ENCODE measurements at regions of chr5 and their contacts with region 1.

Region 1: DNA sequence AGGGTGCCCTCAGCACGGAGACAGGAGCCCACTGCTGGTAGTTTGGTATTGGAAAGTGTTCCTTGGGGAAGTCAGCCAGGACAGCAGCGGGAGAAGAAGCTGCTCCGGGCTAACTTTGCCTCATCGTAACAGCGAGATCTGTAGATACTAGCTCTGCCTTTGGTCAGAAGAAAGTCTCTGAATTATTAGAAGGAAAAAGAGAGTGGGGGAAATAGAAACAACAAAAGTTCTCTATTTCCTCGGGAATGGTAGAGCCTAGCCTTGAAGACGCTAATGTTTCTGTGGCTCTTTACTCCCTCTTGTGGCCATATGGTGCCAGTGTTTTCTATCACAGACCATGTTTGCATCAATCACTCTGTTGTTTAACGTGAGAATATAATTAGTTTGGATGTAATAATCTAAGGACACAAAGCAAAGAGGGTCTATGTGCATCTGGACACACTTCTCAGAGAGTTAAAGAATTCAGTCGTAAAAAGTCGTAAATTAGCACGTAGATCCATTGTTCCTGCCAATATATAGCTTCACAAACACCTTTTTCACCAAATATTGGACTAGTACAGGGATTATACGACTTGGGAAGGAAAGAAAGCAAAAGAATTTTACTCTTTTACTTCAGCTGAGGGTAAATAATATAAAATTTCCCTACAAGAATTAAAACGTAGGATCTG is 40.2 kb upstream of the HSD17B4 start:
- DNase-seq: peak; percentile 36 to 61
- H3K4me3 ChIP-seq: peak overlapping the region; percentile 59
- H3K27ac ChIP-seq: no peak overlapping the region
- H3K4me1 ChIP-seq: peaks cover 14% of the 10 kb centered on the region; the same call in 1 of the 2 replicates
- H3K27me3 ChIP-seq: no peaks in the 10 kb centered on the region
- CTCF ChIP-seq: peak; percentile 88

Region 2: GRCh38 chr5:119022017-119022745 is 389.9 kb before region 1 on chr5:
- CTCF ChIA-PET with region 1: interaction called, 7 read pairs
- POLR2A ChIA-PET with region 1: no interaction called
- intact Hi-C with region 1: loop called (anchors 1 kb)
- DNase-seq: peak in 1 of 2 experiments; percentile 36
- H3K4me3 ChIP-seq: no peak overlapping the region
- H3K27ac ChIP-seq: no peak overlapping the region
- H3K4me1 ChIP-seq: no peaks in the 10 kb centered on the region
- H3K27me3 ChIP-seq: no peaks in the 10 kb centered on the region
- CTCF ChIP-seq: peak; percentile 61

Region 3: DNA sequence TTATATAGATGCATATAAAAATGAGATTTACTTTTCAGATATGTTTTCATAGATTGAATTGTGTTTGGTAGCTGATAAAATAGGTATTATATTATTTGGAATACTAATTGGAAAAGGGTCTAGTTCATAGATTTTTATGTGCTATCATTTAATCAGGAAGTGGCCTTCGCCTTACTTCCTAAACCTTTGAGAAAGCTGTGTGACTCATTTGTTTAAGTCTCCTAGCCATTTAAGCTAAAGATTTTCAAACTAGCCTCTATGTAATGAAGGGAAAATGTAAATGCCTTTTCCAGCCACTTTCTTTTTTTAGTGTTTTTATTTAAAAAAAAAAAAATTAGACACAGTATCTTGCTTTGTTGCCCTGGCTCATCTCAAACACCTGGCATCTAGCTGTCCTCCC is 243.7 kb before region 1 on chr5:
- CTCF ChIA-PET with region 1: no interaction called
- POLR2A ChIA-PET with region 1: no interaction called
- intact Hi-C with region 1: no loop called
- DNase-seq: no peak
- H3K4me3 ChIP-seq: no peak overlapping the region
- H3K27ac ChIP-seq: peak overlapping the region; percentile 46; the same call in 1 of the 2 replicates
- H3K4me1 ChIP-seq: peaks cover 10% of the 10 kb centered on the region
- H3K27me3 ChIP-seq: no peaks in the 10 kb centered on the region
- CTCF ChIP-seq: no peak

Region 4: GRCh38 chr5:119179857-119180641 is 232.0 kb before region 1 on chr5:
- CTCF ChIA-PET with region 1: no interaction called
- POLR2A ChIA-PET with region 1: no interaction called
- intact Hi-C with region 1: loop called (anchors 10 kb)
- DNase-seq: no peak
- H3K4me3 ChIP-seq: no peak overlapping the region
- H3K27ac ChIP-seq: no peak overlapping the region
- H3K4me1 ChIP-seq: 0 out of 2 replicates have a peak, but pooled peaks cover 6% of the 10 kb centered on the region
- H3K27me3 ChIP-seq: no peaks in the 10 kb centered on the region
- CTCF ChIP-seq: no peak

Region 5: DNA sequence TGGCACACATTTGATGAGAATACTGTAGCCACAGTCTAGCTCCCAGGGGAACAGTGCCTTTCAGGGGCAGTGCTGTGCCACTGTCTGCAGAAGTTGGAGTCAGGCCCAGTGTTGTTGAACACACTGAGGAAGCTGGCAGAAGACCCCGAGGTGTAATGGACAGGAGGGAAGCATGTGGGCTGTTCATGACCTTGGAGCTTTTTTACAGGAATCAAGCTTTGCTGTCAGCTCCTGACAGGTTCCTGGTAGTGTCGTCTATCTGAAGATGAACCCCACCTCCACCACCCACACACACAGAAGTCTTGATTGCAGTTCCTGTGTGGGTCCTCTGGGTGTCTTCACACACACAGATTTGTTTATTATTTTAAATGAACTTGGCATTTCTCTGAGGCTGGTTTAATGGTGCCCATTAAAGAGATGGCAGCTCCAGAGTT is 96.5 kb before region 1 on chr5:
- CTCF ChIA-PET with region 1: interaction called, 12 read pairs
- POLR2A ChIA-PET with region 1: no interaction called
- intact Hi-C with region 1: loop called (anchors 5 kb)
- DNase-seq: no peak
- H3K4me3 ChIP-seq: no peak overlapping the region
- H3K27ac ChIP-seq: no peak overlapping the region
- H3K4me1 ChIP-seq: no peaks in the 10 kb centered on the region
- H3K27me3 ChIP-seq: no peaks in the 10 kb centered on the region
- CTCF ChIP-seq: peak; percentile 46; the same call in 1 of the 2 replicates

Region 6: DNA sequence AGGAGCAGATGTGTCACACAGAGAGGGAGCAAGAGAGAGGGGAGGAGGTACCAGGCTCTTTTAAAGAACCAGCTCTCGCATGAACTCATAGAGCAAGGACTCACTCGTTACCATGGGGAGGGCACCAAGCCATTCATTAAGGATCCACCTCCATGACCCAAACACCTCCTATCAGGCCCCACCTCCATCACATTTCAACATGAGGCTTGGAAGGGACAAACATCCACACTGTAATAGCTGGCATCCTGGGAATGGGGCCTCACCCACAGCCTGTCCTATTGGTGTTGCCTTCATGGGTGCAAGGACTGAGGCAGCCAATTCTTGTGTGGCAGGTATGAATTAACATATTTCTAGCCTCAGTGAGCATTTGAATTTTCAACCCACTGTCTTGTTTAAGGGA is 67.8 kb before region 1 on chr5:
- CTCF ChIA-PET with region 1: no interaction called
- POLR2A ChIA-PET with region 1: no interaction called
- intact Hi-C with region 1: no loop called
- DNase-seq: no peak
- H3K4me3 ChIP-seq: no peak overlapping the region
- H3K27ac ChIP-seq: no peak overlapping the region
- H3K4me1 ChIP-seq: peaks cover 15% of the 10 kb centered on the region
- H3K27me3 ChIP-seq: no peaks in the 10 kb centered on the region
- CTCF ChIP-seq: no peak

Region 7: DNA sequence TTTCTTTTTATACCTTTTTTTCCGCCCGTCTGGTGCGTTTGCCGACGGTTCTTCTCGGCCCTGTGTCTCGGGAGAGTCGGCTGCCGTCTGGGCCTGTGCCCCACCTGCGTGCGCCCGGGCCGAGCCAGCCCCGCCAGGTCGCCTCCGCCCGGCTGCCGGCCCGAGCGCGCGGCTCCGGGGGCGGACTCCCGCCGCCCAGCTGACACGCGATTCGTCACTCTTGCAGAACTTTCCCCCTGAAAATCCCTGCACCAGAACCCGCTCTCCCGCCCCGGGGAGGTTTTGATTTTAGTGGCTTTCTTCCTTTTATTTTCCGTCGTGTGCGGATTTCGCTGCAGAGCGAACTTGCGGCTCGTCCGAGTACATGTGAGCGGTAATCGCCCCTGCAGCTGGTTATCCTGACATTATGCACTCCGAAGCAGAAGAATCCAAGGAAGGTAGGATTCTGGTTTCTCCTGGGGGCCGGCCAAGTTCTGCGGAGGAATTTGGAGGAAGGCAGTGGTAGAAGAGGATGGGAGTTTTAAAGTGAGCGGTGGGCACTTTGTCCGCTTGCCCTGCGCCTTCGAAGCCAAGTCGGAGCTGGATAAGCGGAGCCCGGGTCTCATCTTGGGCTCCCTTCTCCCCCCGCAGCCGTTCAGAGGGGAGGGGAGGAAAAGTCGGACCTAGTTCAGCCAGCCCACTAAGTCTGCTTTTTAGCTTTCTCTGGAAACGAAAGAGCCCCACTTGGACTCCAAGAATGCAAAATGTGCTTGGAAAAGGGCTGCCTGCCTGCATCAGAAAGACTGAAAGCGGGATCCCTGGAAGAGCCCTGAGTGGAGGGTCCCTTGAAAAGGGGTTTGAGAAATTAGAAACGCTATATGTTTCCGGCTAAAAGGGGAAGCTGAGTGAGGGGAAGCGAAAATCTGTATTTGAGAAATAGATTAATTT is 56.1 kb before region 1 on chr5 and contains the start of gene TNFAIP8:
- CTCF ChIA-PET with region 1: interaction called, 10 read pairs
- POLR2A ChIA-PET with region 1: no interaction called
- intact Hi-C with region 1: loop called (anchors 2 kb)
- DNase-seq: peak; percentile 56 to 58
- H3K4me3 ChIP-seq: peak within 1 kb of the TSS; percentile 96
- H3K27ac ChIP-seq: peak within 1 kb of the TSS; percentile 78
- H3K4me1 ChIP-seq: peaks cover 67% of the 10 kb centered on the region
- H3K27me3 ChIP-seq: no peaks in the 10 kb centered on the region
- CTCF ChIP-seq: no peak
- total RNA-seq, gene TNFAIP8: 15.0 and 16.4 TPM in 2 replicates